ENCODE measurements at regions of chr19 and their contacts with region 1.

Region 1: GRCh38 chr19:12847159-12848139 is 9.1 kb downstream of the MAST1 start:
- DNase-seq: peak; percentile 89

Region 2: GRCh38 chr19:12864721-12865715 is 17.6 kb after region 1 on chr19:
- CTCF ChIA-PET with region 1: interaction called, 14 read pairs
- POLR2A ChIA-PET with region 1: no interaction called
- DNase-seq: no peak

Region 3: DNA sequence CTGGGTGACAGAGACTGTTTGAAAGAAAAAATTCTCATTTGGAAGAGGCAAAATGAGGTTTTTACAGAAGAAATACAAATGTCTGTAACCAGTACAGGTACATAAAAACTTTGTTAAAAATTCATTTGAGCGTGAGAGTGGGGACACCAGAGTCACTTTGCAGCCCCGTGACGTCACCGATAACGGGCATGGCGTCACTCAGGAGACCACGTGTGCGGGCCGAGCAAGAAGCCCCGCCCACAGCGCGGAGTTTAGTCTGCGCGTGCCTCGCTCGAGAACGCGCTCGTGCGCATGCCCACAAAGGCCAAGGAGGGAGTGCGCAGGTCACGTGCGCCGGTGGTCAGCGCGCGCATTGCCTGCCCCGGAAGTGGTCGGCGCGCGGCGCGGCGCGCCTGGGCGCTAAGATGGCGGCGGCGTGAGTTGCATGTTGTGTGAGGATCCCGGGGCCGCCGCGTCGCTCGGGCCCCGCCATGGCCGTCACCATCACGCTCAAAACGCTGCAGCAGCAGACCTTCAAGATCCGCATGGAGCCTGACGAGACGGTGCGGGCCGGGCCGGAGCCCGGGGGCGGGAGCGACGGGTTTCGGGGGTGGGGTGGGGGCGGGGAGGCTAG is 98.1 kb after region 1 on chr19 and contains the start of gene RAD23A:
- CTCF ChIA-PET with region 1: no interaction called
- POLR2A ChIA-PET with region 1: no interaction called
- DNase-seq: peak; percentile 96

Region 4: GRCh38 chr19:12965017-12965811 is 117.8 kb after region 1 on chr19:
- CTCF ChIA-PET with region 1: no interaction called
- POLR2A ChIA-PET with region 1: no interaction called
- DNase-seq: peak; percentile 87